K562 (cell line): ENCODE measurements at regions of chr15 and their contacts with region 1.

Region 1: DNA sequence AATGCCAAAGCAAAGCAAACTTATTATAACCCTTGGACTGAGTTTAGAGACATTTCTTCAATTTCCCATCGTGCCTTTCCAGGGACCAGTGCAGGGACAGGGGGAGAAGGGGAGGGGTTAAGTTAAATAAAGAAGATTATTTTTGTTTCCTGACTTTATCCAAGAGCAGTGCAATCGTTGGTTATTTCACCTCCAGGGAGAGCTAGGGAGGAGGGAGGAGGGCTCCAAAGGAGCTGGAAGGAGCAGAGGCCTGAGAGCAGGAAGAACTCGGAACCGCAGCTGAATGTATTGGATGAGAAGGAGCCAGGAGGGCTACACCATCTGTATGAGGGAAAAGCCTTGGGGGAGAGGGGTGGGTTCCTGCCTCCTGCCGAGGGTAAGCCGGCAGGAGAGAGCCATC is 20.7 kb downstream of the HAPLN3 start:
- DNase-seq: no peak
- ATAC-seq: no peak
- H3K4me3 ChIP-seq: no peak overlapping the region
- H3K27ac ChIP-seq: no peak overlapping the region
- H3K4me1 ChIP-seq: peaks cover 8 to 34% of the 10 kb centered on the region in 2 experiments; a peak in 4 of 5 replicates
- H3K27me3 ChIP-seq: peaks cover 41 to 73% of the 10 kb centered on the region in 2 experiments; a peak in 4 of 5 replicates
- CTCF ChIP-seq: no peak
- EP300 ChIP-seq: no peak
- POLR2A ChIP-seq: no peak
- RAD21 ChIP-seq: no peak

Region 2: DNA sequence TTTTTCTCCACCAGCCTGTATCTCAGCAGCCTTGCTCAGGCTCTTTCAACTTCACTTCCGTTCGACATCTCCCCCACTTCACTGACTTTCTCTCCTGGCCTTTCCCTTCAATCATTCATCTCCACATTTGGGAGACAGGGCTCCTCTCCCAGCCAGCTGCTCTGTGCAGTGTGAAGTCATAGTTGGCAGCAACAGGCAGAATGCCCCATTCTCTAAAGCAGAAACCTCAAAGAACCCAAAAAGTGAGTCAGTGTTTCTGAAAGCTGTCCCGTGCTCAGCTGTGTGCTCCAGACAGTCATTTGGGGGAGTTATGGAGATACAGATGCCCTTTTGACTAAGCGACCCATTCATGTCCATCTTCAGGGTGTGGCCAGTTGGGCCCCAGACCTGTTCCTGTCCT is 672.5 kb before region 1 on chr15:
- CTCF ChIA-PET with region 1: no interaction called
- POLR2A ChIA-PET with region 1: no interaction called
- in situ Hi-C with region 1: no loop called
- intact Hi-C with region 1: no loop called
- DNase-seq: no peak
- ATAC-seq: no peak
- H3K4me3 ChIP-seq: no peak overlapping the region
- H3K27ac ChIP-seq: no peak overlapping the region
- H3K4me1 ChIP-seq: no peaks in the 10 kb centered on the region
- H3K27me3 ChIP-seq: peaks cover 3 to 17% of the 10 kb centered on the region in 2 experiments; a peak in 4 of 5 replicates
- CTCF ChIP-seq: no peak
- EP300 ChIP-seq: no peak
- POLR2A ChIP-seq: no peak
- RAD21 ChIP-seq: no peak

Region 3: DNA sequence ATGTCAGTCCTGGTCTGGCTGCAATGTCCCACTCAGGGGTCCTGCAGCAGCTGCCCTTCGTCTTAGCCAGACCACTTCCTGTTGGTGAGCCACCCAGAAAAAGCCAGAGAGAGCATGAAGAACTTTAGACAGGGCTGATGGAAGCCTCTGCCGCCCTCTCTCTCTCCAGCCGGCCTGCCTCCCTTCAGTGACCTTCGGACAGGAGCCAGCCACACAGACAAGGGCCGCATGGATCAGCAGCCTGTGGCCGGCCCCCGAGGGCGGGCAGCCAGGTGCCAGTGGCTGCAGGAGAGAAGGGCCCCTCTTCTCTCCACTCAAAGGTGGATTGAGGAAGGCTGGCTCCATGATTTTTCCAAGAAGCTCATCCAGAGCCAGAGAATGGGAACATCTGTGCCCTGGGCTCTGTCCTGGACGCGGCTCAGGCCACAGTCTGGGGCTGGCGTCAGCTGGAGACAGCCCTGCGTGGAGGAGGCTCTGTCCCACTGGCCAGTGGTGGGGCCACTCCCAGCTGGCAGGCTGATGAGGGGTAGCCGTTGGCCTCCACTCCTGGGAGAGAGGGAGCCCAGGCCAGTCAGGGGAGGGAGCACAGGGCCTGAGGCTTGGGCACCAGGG is 193.0 kb before region 1 on chr15:
- CTCF ChIA-PET with region 1: no interaction called
- POLR2A ChIA-PET with region 1: no interaction called
- in situ Hi-C with region 1: no loop called
- intact Hi-C with region 1: no loop called
- DNase-seq: no peak
- ATAC-seq: peak; percentile 51
- H3K4me3 ChIP-seq: no peak overlapping the region
- H3K27ac ChIP-seq: no peak overlapping the region
- H3K4me1 ChIP-seq: peaks cover 0 to 5% of the 10 kb centered on the region in 2 experiments; a peak in 2 of 5 replicates
- H3K27me3 ChIP-seq: peaks cover 19 to 42% of the 10 kb centered on the region in 2 experiments; a peak in 4 of 5 replicates
- CTCF ChIP-seq: no peak
- EP300 ChIP-seq: no peak
- POLR2A ChIP-seq: no peak
- RAD21 ChIP-seq: no peak

Region 4: GRCh38 chr15:88834211-88834812 is 40.4 kb before region 1 on chr15:
- CTCF ChIA-PET with region 1: no interaction called
- POLR2A ChIA-PET with region 1: interaction called, 3 read pairs
- in situ Hi-C with region 1: no loop called
- intact Hi-C with region 1: loop called (anchors 5 kb)
- DNase-seq: peak; percentile 48 to 59 (median 55)
- ATAC-seq: peak; percentile 82
- H3K4me3 ChIP-seq: no peak overlapping the region
- H3K27ac ChIP-seq: no peak overlapping the region
- H3K4me1 ChIP-seq: peaks cover 0 to 8% of the 10 kb centered on the region in 2 experiments; a peak in 3 of 5 replicates
- H3K27me3 ChIP-seq: peaks cover 8 to 33% of the 10 kb centered on the region in 2 experiments; a peak in 4 of 5 replicates
- CTCF ChIP-seq: peak; percentile 76 to 87 (median 79)
- EP300 ChIP-seq: no peak
- POLR2A ChIP-seq: no peak
- RAD21 ChIP-seq: peak; percentile 84 to 91

Region 5: GRCh38 chr15:88904624-88905327 is 30.1 kb after region 1 on chr15:
- CTCF ChIA-PET with region 1: no interaction called
- POLR2A ChIA-PET with region 1: no interaction called
- in situ Hi-C with region 1: no loop called
- intact Hi-C with region 1: no loop called
- DNase-seq: peak; percentile 85 to 91 (median 88)
- ATAC-seq: peak; percentile 93
- H3K4me3 ChIP-seq: no peak overlapping the region
- H3K27ac ChIP-seq: 0 out of 3 replicates have a peak overlapping the region, but pooled peaks have one; percentile 25
- H3K4me1 ChIP-seq: peaks cover 17 to 26% of the 10 kb centered on the region in 2 experiments; a peak in 4 of 5 replicates
- H3K27me3 ChIP-seq: no peaks in the 10 kb centered on the region
- CTCF ChIP-seq: peak; percentile 94 to 98 (median 94)
- EP300 ChIP-seq: peak; percentile 13; the same call in 1 of the 2 replicates
- POLR2A ChIP-seq: no peak
- RAD21 ChIP-seq: peak; percentile 94 to 95

Region 6: GRCh38 chr15:88938802-88939485 is 64.3 kb after region 1 on chr15:
- CTCF ChIA-PET with region 1: no interaction called
- POLR2A ChIA-PET with region 1: no interaction called
- in situ Hi-C with region 1: no loop called
- intact Hi-C with region 1: no loop called
- DNase-seq: peak; percentile 34 to 87 (median 50)
- ATAC-seq: peak; percentile 94
- H3K4me3 ChIP-seq: no peak overlapping the region
- H3K27ac ChIP-seq: peak overlapping the region; percentile 71
- H3K4me1 ChIP-seq: peaks cover 6 to 20% of the 10 kb centered on the region in 2 experiments; a peak in 4 of 5 replicates
- H3K27me3 ChIP-seq: no peaks in the 10 kb centered on the region
- CTCF ChIP-seq: peak; percentile 59 to 73 (median 70)
- EP300 ChIP-seq: peak; percentile 65
- POLR2A ChIP-seq: peak; percentile 66
- RAD21 ChIP-seq: peak; percentile 66 to 79